ENCODE measurements at regions of chr2 and their contacts with region 1.

Region 1: GRCh38 chr2:171416009-171416926 is 17.5 kb downstream of the METTL8 start:
- DNase-seq: peak; percentile 93
- H3K4me3 ChIP-seq: no peak overlapping the region; the same call in 1 of the 2 replicates
- H3K27ac ChIP-seq: no peak overlapping the region
- H3K27me3 ChIP-seq: no peaks in the 10 kb centered on the region
- CTCF ChIP-seq: peak; percentile 98

Region 2: DNA sequence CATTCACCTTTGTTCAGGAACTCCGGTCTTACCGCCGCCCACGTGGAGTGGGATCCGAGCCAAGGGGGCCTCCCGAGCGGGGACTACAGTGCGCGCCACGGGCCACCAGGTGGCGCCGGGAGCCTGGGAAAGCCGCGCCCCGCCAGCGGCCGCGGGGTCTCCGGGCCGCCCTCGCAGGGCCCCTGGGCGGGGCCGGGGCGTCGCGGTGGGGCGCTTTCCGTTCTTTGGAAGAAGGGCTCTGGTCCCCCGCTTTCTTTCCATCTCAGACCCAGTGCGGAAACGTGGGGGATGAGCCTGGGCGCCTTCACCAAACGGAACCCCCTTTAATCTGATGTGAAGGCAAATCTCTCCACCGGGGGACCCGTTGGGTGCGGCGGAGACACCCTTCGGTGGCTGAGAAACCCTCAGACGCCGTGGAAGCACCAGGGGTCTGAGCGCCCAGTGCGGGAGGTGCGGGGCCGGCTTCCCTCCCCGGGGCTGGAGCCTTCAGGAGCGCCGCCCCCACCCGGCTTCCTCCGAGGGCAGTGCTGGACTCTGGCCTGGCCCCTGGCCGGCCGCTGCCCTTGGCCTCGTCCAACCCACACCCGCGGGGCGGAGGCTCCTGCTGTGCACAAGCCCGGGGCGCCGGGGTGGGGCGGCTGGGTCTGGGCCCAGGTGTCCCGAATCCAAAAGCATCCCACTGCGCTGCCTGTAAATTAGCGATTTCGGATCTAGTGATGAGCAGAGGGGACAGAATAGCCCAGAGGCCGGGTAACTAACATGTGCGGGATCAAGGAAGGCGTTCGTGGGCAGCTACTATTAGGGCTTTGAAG is 442.6 kb before region 1 on chr2:
- CTCF ChIA-PET with region 1: interaction called, 39 read pairs
- POLR2A ChIA-PET with region 1: interaction called, 6 read pairs
- DNase-seq: no peak
- H3K4me3 ChIP-seq: peak overlapping the region; percentile 71
- H3K27ac ChIP-seq: peak overlapping the region; percentile 73
- H3K27me3 ChIP-seq: no peaks in the 10 kb centered on the region
- CTCF ChIP-seq: peak; percentile 73

Region 3: GRCh38 chr2:171049691-171050090 is 366.6 kb before region 1 on chr2:
- CTCF ChIA-PET with region 1: interaction called, 12 read pairs
- POLR2A ChIA-PET with region 1: no interaction called
- DNase-seq: no peak
- H3K4me3 ChIP-seq: no peak overlapping the region
- H3K27ac ChIP-seq: no peak overlapping the region
- H3K27me3 ChIP-seq: no peaks in the 10 kb centered on the region
- CTCF ChIP-seq: no peak

Region 4: GRCh38 chr2:171086352-171087290 is 329.6 kb before region 1 on chr2:
- CTCF ChIA-PET with region 1: interaction called, 12 read pairs
- POLR2A ChIA-PET with region 1: no interaction called
- DNase-seq: peak; percentile 7
- H3K4me3 ChIP-seq: no peak overlapping the region
- H3K27ac ChIP-seq: no peak overlapping the region
- H3K27me3 ChIP-seq: no peaks in the 10 kb centered on the region
- CTCF ChIP-seq: peak; percentile 74

Region 5: GRCh38 chr2:171154348-171154747 is 261.9 kb before region 1 on chr2:
- CTCF ChIA-PET with region 1: interaction called, 13 read pairs
- POLR2A ChIA-PET with region 1: no interaction called
- DNase-seq: no peak
- H3K4me3 ChIP-seq: no peak overlapping the region
- H3K27ac ChIP-seq: no peak overlapping the region
- H3K27me3 ChIP-seq: no peaks in the 10 kb centered on the region
- CTCF ChIP-seq: no peak

Region 6: GRCh38 chr2:171159372-171160118 is 256.7 kb before region 1 on chr2:
- CTCF ChIA-PET with region 1: interaction called, 13 read pairs
- POLR2A ChIA-PET with region 1: interaction called, 6 read pairs
- DNase-seq: peak; percentile 29
- H3K4me3 ChIP-seq: peak overlapping the region; percentile 82
- H3K27ac ChIP-seq: peak overlapping the region; percentile 88
- H3K27me3 ChIP-seq: no peaks in the 10 kb centered on the region
- CTCF ChIP-seq: peak; percentile 64

Region 7: GRCh38 chr2:171260471-171261424 is 155.5 kb before region 1 on chr2:
- CTCF ChIA-PET with region 1: no interaction called
- POLR2A ChIA-PET with region 1: no interaction called
- DNase-seq: no peak
- H3K4me3 ChIP-seq: no peak overlapping the region
- H3K27ac ChIP-seq: no peak overlapping the region
- H3K27me3 ChIP-seq: no peaks in the 10 kb centered on the region
- CTCF ChIP-seq: no peak

Region 8: GRCh38 chr2:171433763-171434670 is 17.7 kb after region 1 on chr2 and contains the starts of genes DCAF17 and METTL8:
- CTCF ChIA-PET with region 1: interaction called, 17 read pairs
- POLR2A ChIA-PET with region 1: interaction called, 4 read pairs
- DNase-seq: peak; percentile 81
- H3K4me3 ChIP-seq: peak within 1 kb of the TSS; percentile 91
- H3K27ac ChIP-seq: peak within 1 kb of the TSS; percentile 93
- H3K27me3 ChIP-seq: no peaks in the 10 kb centered on the region
- CTCF ChIP-seq: peak; percentile 35
- polyA plus RNA-seq, gene DCAF17: 12.4 and 18.3 TPM in 2 replicates
- polyA plus RNA-seq, gene METTL8: 16.0 and 25.9 TPM in 2 replicates

Measured in AG04450 (cell line).